A549 (cell line): ENCODE measurements at regions of chr11 and their contacts with region 1.

Region 1: DNA sequence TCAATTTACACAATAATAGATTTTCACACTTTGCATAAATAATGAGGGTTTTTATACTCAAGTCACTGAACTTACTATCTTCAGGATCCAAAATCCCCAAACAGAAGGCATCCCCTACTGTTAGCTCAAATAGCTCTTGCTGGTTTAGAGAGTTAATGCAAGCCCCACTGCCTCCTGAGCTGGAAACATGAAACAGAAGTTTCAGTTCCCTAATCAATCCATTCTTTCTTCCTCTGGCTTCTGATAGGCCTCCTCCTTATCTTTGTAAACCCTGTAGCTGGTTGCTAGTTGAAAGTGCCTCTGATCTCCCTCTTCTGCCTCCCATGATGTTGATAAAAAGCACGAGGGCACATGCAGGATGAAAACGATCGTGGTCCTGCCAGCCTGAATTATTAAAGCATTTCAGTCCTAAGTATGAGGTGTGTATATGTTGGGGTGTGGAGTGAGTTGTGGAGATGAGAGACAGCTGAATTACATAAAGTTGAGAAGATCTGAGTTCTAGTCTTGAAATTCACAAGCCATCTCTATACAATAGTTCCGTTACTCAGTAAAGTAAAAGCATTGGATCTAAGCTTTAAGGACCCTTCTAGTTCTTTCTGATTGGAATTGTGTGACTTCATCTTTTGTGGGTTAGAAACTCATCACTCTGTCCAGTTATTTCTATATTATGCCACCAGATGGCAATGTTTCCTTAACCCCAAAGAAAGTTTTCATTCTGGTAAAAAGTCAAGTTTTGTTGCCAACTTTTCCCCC is 35.0 kb upstream of the EHF start:
- DNase-seq: peak; percentile 49 to 79
- ATAC-seq: peak; percentile 79 to 83
- H3K4me3 ChIP-seq: no peak overlapping the region
- H3K27ac ChIP-seq: peak overlapping the region; percentile 84 to 91
- H3K4me1 ChIP-seq: peaks cover 32% of the 10 kb centered on the region
- CTCF ChIP-seq: peak; percentile 88
- EP300 ChIP-seq: no peak
- POLR2A ChIP-seq: no peak
- RAD21 ChIP-seq: peak; percentile 96 to 99

Region 2: DNA sequence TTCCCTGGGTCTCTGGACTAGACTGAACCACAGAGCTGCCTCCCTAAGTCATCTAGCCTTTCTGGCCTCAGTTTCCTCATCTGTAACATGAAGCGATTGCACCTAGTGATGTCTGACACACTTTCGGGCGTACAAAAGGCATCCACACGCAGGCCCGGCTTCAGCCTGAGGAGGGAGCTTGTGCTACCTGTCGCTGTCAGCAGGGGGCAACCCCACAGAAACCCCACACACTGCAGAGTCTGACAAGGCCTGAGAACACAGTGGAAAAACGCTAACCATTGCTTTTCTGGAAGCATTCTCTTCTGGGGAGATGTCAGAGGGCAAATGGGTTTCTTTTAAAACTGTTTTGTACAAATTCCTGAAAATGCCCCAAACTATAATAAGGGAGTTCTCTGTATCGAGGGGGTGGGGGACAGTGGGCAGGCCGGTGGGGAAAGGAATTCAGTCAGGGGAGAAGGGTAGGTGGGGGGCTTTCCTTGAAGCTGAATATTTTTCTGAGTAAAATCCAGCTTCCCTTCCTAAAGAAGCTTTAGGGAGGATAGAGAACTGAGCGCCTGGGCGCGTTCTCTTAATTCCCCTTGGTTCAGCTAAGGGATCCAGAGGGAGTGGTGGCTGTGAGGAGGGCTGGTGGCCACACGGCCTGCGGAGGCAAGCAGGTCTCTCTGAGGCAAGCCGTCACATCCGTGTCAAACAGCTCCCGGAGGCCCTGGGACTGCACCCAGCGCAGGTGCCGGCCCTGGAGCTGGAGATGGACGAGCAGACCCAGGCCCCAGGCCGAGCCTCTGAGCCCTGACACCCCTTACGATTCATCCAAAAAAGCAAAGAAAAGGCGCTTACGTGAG is 72.8 kb before region 1 on chr11:
- CTCF ChIA-PET with region 1: interaction called, 38 read pairs
- POLR2A ChIA-PET with region 1: no interaction called
- DNase-seq: peak; percentile 74 to 81
- ATAC-seq: peak; percentile 92 to 99
- H3K4me3 ChIP-seq: no peak overlapping the region
- H3K27ac ChIP-seq: peak overlapping the region in 1 of 2 experiments; percentile 52; a peak in 3 of 6 replicates
- H3K4me1 ChIP-seq: no peaks in the 10 kb centered on the region
- CTCF ChIP-seq: peak; percentile 69
- EP300 ChIP-seq: no peak
- POLR2A ChIP-seq: no peak
- RAD21 ChIP-seq: peak; percentile 71 to 74

Region 3: DNA sequence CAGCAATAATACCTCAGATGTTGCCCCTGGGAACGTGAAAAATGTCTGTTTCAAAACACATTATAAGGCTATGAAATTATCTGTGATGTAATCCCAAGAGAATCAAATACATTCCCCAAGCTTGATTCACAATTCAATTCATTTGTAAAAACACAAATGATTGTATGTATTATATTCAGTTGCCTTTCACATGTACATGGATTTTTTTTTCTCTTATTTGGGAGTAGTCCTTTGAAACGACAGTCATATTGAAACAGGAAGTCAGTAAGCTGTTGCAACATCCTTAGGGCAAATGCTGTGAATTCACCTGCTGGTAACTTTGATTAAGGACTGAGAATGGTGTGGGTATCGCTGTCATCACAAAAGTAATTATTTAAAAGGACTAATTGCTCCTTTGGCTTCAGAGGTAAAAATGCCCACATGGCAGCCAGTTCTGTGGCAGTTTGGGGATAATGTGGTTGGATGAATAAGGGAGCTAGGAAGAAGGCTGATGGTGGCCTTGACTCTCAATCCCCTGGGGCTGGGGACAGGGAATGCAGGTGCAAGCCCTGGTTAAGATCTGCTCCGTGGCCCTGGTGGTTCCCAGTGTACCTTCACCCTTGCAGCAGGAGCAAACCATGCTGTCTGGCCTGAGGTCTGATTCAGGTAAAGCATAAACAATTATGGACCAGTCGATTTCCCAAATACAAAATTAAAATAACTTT is 48.2 kb after region 1 on chr11:
- CTCF ChIA-PET with region 1: interaction called, 63 read pairs
- POLR2A ChIA-PET with region 1: no interaction called
- DNase-seq: peak in 1 of 2 experiments; percentile 60
- ATAC-seq: peak in 1 of 2 experiments; percentile 29; a peak in 4 of 6 replicates
- H3K4me3 ChIP-seq: no peak overlapping the region
- H3K27ac ChIP-seq: peak overlapping the region; percentile 77 to 94
- H3K4me1 ChIP-seq: peaks cover 82% of the 10 kb centered on the region
- CTCF ChIP-seq: no peak
- EP300 ChIP-seq: peak in 1 of 2 experiments; percentile 34; a peak in 1 of 5 replicates
- POLR2A ChIP-seq: no peak
- RAD21 ChIP-seq: no peak; a peak in 1 of 5 replicates

Region 4: GRCh38 chr11:34680918-34681554 is 95.1 kb after region 1 on chr11:
- CTCF ChIA-PET with region 1: interaction called, 16 read pairs
- POLR2A ChIA-PET with region 1: no interaction called
- DNase-seq: peak; percentile 71 to 90
- ATAC-seq: peak; percentile 76 to 82; a peak in 5 of 6 replicates
- H3K4me3 ChIP-seq: no peak overlapping the region
- H3K27ac ChIP-seq: peak overlapping the region; percentile 75 to 86
- H3K4me1 ChIP-seq: peaks cover 55% of the 10 kb centered on the region
- CTCF ChIP-seq: no peak
- EP300 ChIP-seq: peak; percentile 26 to 32; a peak in 1 of 5 replicates
- POLR2A ChIP-seq: no peak
- RAD21 ChIP-seq: 0 out of 5 replicates have a peak, but pooled peaks of 1 of the 2 experiments have one; percentile 14

Region 5: GRCh38 chr11:34881900-34882299 is 296.0 kb after region 1 on chr11:
- CTCF ChIA-PET with region 1: interaction called, 22 read pairs
- POLR2A ChIA-PET with region 1: no interaction called
- DNase-seq: no peak
- ATAC-seq: no peak
- H3K4me3 ChIP-seq: no peak overlapping the region
- H3K27ac ChIP-seq: no peak overlapping the region
- H3K4me1 ChIP-seq: peaks cover 5% of the 10 kb centered on the region
- CTCF ChIP-seq: no peak
- EP300 ChIP-seq: no peak
- POLR2A ChIP-seq: no peak
- RAD21 ChIP-seq: no peak

Region 6: GRCh38 chr11:34907934-34908593 is 322.2 kb after region 1 on chr11:
- CTCF ChIA-PET with region 1: interaction called, 14 read pairs
- POLR2A ChIA-PET with region 1: no interaction called
- DNase-seq: no peak
- ATAC-seq: no peak
- H3K4me3 ChIP-seq: no peak overlapping the region
- H3K27ac ChIP-seq: no peak overlapping the region
- H3K4me1 ChIP-seq: no peaks in the 10 kb centered on the region
- CTCF ChIP-seq: no peak
- EP300 ChIP-seq: no peak
- POLR2A ChIP-seq: no peak
- RAD21 ChIP-seq: no peak